Dendritic cell treated with granulocyte-macrophage colony-stimulating factor and Interleukin-4, amounts not matched to agents 40 ng/mL and 50 ng/mL, for 4 days (primary cell): ENCODE measurements at regions of chr2 and their contacts with region 1.

Region 1: GRCh38 chr2:236512902-236513435 is 56.7 kb upstream of the ACKR3 start:
- H3K4me3 Mint-ChIP-seq: no peak overlapping the region
- H3K27ac Mint-ChIP-seq: no peak overlapping the region
- H3K4me1 Mint-ChIP-seq: no peaks in the 10 kb centered on the region
- H3K27me3 Mint-ChIP-seq: peaks cover 14% of the 10 kb centered on the region

Region 2: GRCh38 chr2:236352761-236353593 is 160.0 kb before region 1 on chr2:
- intact Hi-C with region 1: loop called (anchors 10 kb)
- H3K4me3 Mint-ChIP-seq: no peak overlapping the region
- H3K27ac Mint-ChIP-seq: no peak overlapping the region
- H3K4me1 Mint-ChIP-seq: no peaks in the 10 kb centered on the region
- H3K27me3 Mint-ChIP-seq: peaks cover 5% of the 10 kb centered on the region

Region 3: DNA sequence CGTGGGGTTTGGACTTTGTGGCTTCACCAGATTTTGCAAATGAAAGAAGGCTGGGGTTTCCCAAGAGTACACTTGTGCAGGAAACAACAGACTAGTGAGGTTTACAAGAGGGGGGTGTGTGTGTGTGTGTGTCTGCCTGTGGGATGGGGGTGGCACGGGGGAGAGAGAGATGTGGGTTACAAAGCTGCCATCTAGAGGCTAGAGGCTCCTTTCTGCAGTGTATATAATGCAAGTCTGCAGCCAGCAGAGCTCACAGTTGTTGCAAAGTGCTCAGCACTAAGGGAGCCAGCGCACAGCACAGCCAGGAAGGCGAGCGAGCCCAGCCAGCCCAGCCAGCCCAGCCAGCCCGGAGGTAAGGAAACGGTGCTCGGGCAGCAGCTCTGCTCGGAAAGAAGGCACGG is 56.6 kb after region 1 on chr2 and contains the start of gene ACKR3:
- intact Hi-C with region 1: loop called (anchors 1 kb)
- H3K4me3 Mint-ChIP-seq: peak within 1 kb of the TSS; percentile 74
- H3K27ac Mint-ChIP-seq: no peak within 1 kb of the TSS
- H3K4me1 Mint-ChIP-seq: peaks cover 38% of the 10 kb centered on the region
- H3K27me3 Mint-ChIP-seq: peaks cover 25% of the 10 kb centered on the region

Region 4: DNA sequence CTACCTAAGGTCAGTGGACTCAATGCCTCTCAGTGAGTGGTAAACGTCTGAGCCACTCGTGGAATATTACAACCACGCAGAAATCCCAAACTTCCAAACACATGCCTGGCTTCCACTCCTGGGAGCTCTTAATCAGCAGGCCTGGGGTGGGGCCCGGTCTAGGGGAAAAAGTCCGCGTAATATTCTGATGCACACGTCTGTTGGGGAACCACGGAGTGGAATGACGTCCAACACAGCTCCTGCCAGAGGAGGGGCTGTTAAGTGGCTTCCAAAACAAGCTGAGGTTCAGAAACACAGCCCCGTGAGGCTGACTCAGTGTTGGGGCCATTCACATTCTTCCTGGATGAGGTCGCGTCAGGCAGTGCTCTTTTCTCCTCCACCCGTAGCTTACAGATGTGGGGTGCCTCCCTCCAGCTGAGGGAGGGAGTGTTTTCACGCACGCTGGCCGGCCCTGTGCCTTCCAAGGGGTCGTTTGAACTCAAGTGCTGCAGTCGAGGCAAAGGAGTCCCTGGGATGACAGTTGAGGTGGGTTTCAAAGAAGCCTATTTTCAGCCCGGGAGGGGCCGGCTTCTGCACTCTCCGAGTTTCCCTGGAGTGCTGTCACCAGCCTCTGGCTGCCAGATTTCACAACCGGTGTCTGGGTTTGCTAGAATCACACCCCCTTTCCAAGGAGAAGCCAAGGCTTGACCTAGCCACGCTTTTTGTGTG is 129.8 kb after region 1 on chr2:
- intact Hi-C with region 1: no loop called
- H3K4me3 Mint-ChIP-seq: no peak overlapping the region
- H3K27ac Mint-ChIP-seq: no peak overlapping the region
- H3K4me1 Mint-ChIP-seq: no peaks in the 10 kb centered on the region
- H3K27me3 Mint-ChIP-seq: peaks cover 56% of the 10 kb centered on the region

Region 5: GRCh38 chr2:237026981-237027711 is 514.2 kb after region 1 on chr2:
- intact Hi-C with region 1: loop called (anchors 1 kb)
- H3K4me3 Mint-ChIP-seq: no peak overlapping the region
- H3K27ac Mint-ChIP-seq: no peak overlapping the region
- H3K4me1 Mint-ChIP-seq: no peaks in the 10 kb centered on the region
- H3K27me3 Mint-ChIP-seq: peaks cover 13% of the 10 kb centered on the region

Region 6: GRCh38 chr2:237060534-237061312 is 547.8 kb after region 1 on chr2:
- intact Hi-C with region 1: loop called (anchors 1 kb)
- H3K4me3 Mint-ChIP-seq: no peak overlapping the region
- H3K27ac Mint-ChIP-seq: no peak overlapping the region
- H3K4me1 Mint-ChIP-seq: peaks cover 16% of the 10 kb centered on the region
- H3K27me3 Mint-ChIP-seq: peaks cover 5% of the 10 kb centered on the region